Activated CD8-positive, alpha-beta T cell treated with anti-CD3 and anti-CD28 coated beads for 36 hours (primary cell): ENCODE measurements at regions of chr5 and their contacts with region 1.

Region 1: GRCh38 chr5:170434966-170435605 is 45.9 kb upstream of the KCNMB1 start:
- DNase-seq: peak; percentile 75
- ATAC-seq: peak; percentile 98
- H3K4me3 Mint-ChIP-seq: no peak overlapping the region
- H3K27ac Mint-ChIP-seq: no peak overlapping the region
- H3K4me1 Mint-ChIP-seq: no peaks in the 10 kb centered on the region
- H3K27me3 Mint-ChIP-seq: no peaks in the 10 kb centered on the region
- CTCF ChIP-seq: peak; percentile 98

Region 2: GRCh38 chr5:170420780-170421412 is 14.2 kb before region 1 on chr5:
- CTCF ChIA-PET with region 1: interaction called, 30 read pairs
- POLR2A ChIA-PET with region 1: no interaction called
- intact Hi-C with region 1: no loop called
- DNase-seq: peak; percentile 72
- ATAC-seq: peak; percentile 75
- H3K4me3 Mint-ChIP-seq: no peak overlapping the region
- H3K27ac Mint-ChIP-seq: no peak overlapping the region
- H3K4me1 Mint-ChIP-seq: peaks cover 12% of the 10 kb centered on the region
- H3K27me3 Mint-ChIP-seq: no peaks in the 10 kb centered on the region
- CTCF ChIP-seq: peak; percentile 67

Region 3: DNA sequence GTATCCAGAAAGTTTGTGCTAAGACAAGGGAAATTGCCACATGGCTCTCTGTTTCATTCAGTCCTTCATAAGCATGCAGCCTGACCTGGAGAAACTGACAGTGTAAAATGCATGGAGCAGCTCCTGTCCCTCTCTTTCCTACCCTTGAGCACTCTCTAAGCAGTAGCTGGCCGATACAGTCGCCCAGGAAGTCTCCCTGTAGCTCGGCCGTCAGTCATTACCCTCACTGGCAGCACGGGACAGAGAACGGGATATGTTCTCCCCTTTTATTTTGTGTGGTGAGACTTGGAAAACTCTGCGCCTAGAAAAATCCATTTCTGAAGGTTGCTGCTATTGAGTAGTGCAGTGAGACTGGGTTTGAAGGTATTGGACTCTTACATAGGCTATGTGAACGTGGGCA is 10.8 kb after region 1 on chr5:
- CTCF ChIA-PET with region 1: interaction called, 20 read pairs
- POLR2A ChIA-PET with region 1: no interaction called
- intact Hi-C with region 1: no loop called
- DNase-seq: no peak
- ATAC-seq: no peak
- H3K4me3 Mint-ChIP-seq: no peak overlapping the region
- H3K27ac Mint-ChIP-seq: no peak overlapping the region
- H3K4me1 Mint-ChIP-seq: no peaks in the 10 kb centered on the region
- H3K27me3 Mint-ChIP-seq: no peaks in the 10 kb centered on the region
- CTCF ChIP-seq: no peak

Region 4: GRCh38 chr5:170451747-170452365 is 16.8 kb after region 1 on chr5:
- CTCF ChIA-PET with region 1: interaction called, 20 read pairs
- POLR2A ChIA-PET with region 1: no interaction called
- intact Hi-C with region 1: no loop called
- DNase-seq: no peak
- ATAC-seq: no peak
- H3K4me3 Mint-ChIP-seq: no peak overlapping the region
- H3K27ac Mint-ChIP-seq: no peak overlapping the region
- H3K4me1 Mint-ChIP-seq: no peaks in the 10 kb centered on the region
- H3K27me3 Mint-ChIP-seq: no peaks in the 10 kb centered on the region
- CTCF ChIP-seq: no peak

Region 5: DNA sequence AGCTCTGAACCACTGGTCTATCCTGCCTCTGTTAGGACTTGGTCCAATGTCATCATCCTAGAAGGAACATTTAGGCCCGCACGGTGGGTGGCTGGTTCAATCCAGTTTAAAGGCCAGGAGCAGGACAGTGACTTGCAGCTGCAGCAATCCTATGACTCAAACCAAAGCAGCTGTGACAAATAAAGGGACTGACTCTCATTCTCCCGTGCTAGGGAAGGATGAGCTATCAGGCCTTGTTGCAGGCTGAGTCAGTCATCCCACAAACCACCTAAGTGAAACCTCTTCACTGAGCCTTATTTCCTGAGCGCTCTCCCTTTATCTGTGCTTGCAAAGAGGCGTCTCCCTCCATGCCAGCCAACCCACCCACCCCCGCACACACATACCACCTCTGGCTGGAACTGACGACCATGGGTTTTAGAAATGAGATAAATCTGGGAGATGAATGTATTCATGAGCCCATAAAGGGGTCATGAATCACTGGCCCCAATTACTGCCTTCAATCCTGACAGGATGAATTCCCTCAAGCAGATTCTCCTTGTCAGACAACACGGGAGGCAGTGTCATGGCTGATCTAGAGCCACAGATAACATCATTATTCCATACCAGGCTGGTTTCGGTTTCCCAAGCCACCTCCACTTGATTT is 162.1 kb after region 1 on chr5:
- CTCF ChIA-PET with region 1: interaction called, 24 read pairs
- POLR2A ChIA-PET with region 1: no interaction called
- intact Hi-C with region 1: no loop called
- DNase-seq: peak; percentile 69
- ATAC-seq: peak; percentile 84
- H3K4me3 Mint-ChIP-seq: no peak overlapping the region
- H3K27ac Mint-ChIP-seq: no peak overlapping the region
- H3K4me1 Mint-ChIP-seq: peaks cover 19% of the 10 kb centered on the region
- H3K27me3 Mint-ChIP-seq: peaks cover 18% of the 10 kb centered on the region
- CTCF ChIP-seq: no peak

Region 6: GRCh38 chr5:170623576-170624181 is 188.6 kb after region 1 on chr5:
- CTCF ChIA-PET with region 1: interaction called, 78 read pairs
- POLR2A ChIA-PET with region 1: no interaction called
- intact Hi-C with region 1: loop called (anchors 5 kb)
- DNase-seq: peak; percentile 53
- ATAC-seq: no peak
- H3K4me3 Mint-ChIP-seq: no peak overlapping the region
- H3K27ac Mint-ChIP-seq: no peak overlapping the region
- H3K4me1 Mint-ChIP-seq: no peaks in the 10 kb centered on the region
- H3K27me3 Mint-ChIP-seq: peaks cover 6% of the 10 kb centered on the region
- CTCF ChIP-seq: peak; percentile 63

Region 7: GRCh38 chr5:170638454-170639220 is 203.6 kb after region 1 on chr5:
- CTCF ChIA-PET with region 1: interaction called, 118 read pairs
- POLR2A ChIA-PET with region 1: no interaction called
- intact Hi-C with region 1: no loop called
- DNase-seq: peak; percentile 78
- ATAC-seq: peak; percentile 74
- H3K4me3 Mint-ChIP-seq: no peak overlapping the region
- H3K27ac Mint-ChIP-seq: no peak overlapping the region
- H3K4me1 Mint-ChIP-seq: peaks cover 6% of the 10 kb centered on the region
- H3K27me3 Mint-ChIP-seq: peaks cover 9% of the 10 kb centered on the region
- CTCF ChIP-seq: peak; percentile 89